CD4-positive, alpha-beta memory T cell (primary cell): ENCODE measurements at regions of chr11 and their contacts with region 1.

Region 1: GRCh38 chr11:77082838-77083562 is 16.2 kb downstream of the CAPN5 start:
- DNase-seq: peak; percentile 39 to 58 (median 44)
- H3K4me3 ChIP-seq: no peak overlapping the region
- H3K4me3 Mint-ChIP-seq: peak overlapping the region; percentile 57 to 85 (median 76)
- H3K27ac ChIP-seq: peak overlapping the region; percentile 24
- H3K27ac Mint-ChIP-seq: peak overlapping the region; percentile 77 to 95 (median 92)
- H3K4me1 ChIP-seq: peaks cover 18% of the 10 kb centered on the region
- H3K4me1 Mint-ChIP-seq: peaks cover 2 to 15% (median 10%) of the 10 kb centered on the region in 4 donors
- H3K27me3 ChIP-seq: no peaks in the 10 kb centered on the region
- H3K27me3 Mint-ChIP-seq: peaks cover 0 to 3% of the 10 kb centered on the region in 2 donors

Region 2: GRCh38 chr11:77047007-77047927 is 35.7 kb before region 1 on chr11:
- CTCF ChIA-PET with region 1: interaction called, 107 read pairs
- POLR2A ChIA-PET with region 1: interaction called, 14 read pairs
- intact Hi-C with region 1: no loop called
- DNase-seq: peak; percentile 90 to 94 (median 93)
- H3K4me3 ChIP-seq: peak overlapping the region; percentile 33 to 59
- H3K4me3 Mint-ChIP-seq: peak overlapping the region; percentile 67 to 83 (median 72)
- H3K27ac ChIP-seq: peak overlapping the region; percentile 61
- H3K27ac Mint-ChIP-seq: peak overlapping the region; percentile 24 to 92 (median 60)
- H3K4me1 ChIP-seq: peaks cover 16% of the 10 kb centered on the region
- H3K4me1 Mint-ChIP-seq: peaks cover 5 to 11% (median 6%) of the 10 kb centered on the region in 4 donors
- H3K27me3 ChIP-seq: no peaks in the 10 kb centered on the region
- H3K27me3 Mint-ChIP-seq: peaks cover 2 to 3% of the 10 kb centered on the region in 2 donors